Activated CD8-positive, alpha-beta memory T cell treated with anti-CD3 and anti-CD28 coated beads, Interleukin-2, amount 10 ng/mL, durations not matched to agents 7 days and 5 days (primary cell): ENCODE measurements at regions of chr1 and their contacts with region 1.

Region 1: GRCh38 chr1:145978854-145979759 is 14.6 kb downstream of the POLR3GL start:
- DNase-seq: peak; percentile 96
- ATAC-seq: peak; percentile 93
- H3K4me3 Mint-ChIP-seq: no peak overlapping the region
- H3K27ac Mint-ChIP-seq: no peak overlapping the region
- H3K4me1 Mint-ChIP-seq: peaks cover 25% of the 10 kb centered on the region
- H3K27me3 Mint-ChIP-seq: no peaks in the 10 kb centered on the region

Region 2: GRCh38 chr1:145690624-145691035 is 288.5 kb before region 1 on chr1:
- CTCF ChIA-PET with region 1: no interaction called
- DNase-seq: peak; percentile 83
- ATAC-seq: peak; percentile 98
- H3K4me3 Mint-ChIP-seq: peak overlapping the region; percentile 37
- H3K27ac Mint-ChIP-seq: peak overlapping the region; percentile 83
- H3K4me1 Mint-ChIP-seq: peaks cover 32% of the 10 kb centered on the region
- H3K27me3 Mint-ChIP-seq: no peaks in the 10 kb centered on the region

Region 3: DNA sequence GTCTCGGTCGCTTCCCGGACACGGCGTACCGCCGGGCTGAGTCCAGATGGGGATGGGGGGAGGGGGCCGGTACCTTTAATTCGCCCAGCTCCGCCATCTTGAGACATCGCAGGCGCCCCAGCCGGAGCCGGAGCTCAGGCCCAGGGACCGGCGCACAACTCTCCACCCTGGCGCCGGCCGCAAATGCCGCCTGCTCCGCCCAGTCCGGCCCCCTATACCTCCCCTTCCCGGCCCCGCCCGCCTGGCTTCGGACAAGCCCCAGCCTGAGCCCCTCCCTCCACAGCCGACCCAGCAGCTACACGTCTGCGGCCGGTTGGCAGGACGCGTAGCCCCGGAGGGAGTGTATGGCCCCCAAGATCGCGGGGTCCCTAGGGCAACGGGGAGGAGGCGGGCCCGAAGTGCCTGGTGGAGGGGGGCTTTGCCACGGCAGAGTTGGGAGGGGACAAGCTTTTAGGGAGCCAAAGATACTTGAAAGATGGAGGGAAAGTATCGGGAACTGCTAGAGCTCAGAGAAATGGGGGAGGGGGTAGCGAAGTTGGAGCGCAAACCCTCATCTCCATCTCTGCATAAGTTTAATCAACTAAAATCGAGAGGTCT is 120.1 kb before region 1 on chr1 and contains the start of gene PIAS3:
- CTCF ChIA-PET with region 1: interaction called, 13 read pairs
- DNase-seq: peak; percentile 94
- ATAC-seq: peak; percentile 87
- H3K4me3 Mint-ChIP-seq: peak within 1 kb of the TSS; percentile 95
- H3K27ac Mint-ChIP-seq: peak within 1 kb of the TSS; percentile 87
- H3K4me1 Mint-ChIP-seq: peaks cover 10% of the 10 kb centered on the region
- H3K27me3 Mint-ChIP-seq: peaks cover 8% of the 10 kb centered on the region
- total RNA-seq, gene PIAS3: 20.3 to 23.6 TPM

Region 4: DNA sequence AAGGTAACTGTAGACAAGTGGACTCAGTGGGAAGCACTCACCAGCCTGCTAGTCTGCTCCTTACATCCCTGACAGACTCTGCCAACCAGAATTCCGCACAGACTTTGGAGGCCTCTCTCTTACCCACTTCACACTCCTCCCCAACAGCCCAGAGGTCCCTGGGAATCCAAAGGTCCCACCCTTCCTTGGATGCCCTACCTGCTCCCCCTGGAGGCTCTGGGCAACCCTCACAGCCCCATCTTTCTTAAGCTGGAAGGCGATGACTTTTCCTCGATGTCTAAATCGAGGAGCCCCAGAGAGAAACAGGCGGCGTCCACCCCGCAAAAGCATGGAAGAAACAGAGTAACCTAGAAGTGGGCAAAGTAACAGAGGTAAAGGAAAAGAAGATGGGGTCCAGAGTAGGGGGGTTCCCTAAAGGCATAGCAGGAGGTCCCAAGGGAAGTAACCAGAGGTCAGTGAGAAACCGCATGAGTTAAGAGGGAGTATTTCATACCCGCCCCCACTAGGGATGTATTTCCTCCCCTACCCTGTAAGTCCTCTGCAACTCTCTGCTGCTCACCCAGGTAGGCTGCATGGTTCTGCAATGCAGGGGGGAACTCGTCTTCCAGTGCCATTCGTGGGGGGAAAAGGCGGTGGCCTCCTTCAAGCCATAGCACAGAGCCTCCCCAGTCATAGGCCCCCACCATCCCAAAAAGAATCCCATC is 77.6 kb before region 1 on chr1:
- CTCF ChIA-PET with region 1: no interaction called
- DNase-seq: no peak
- ATAC-seq: no peak
- H3K4me3 Mint-ChIP-seq: no peak overlapping the region
- H3K27ac Mint-ChIP-seq: no peak overlapping the region
- H3K4me1 Mint-ChIP-seq: no peaks in the 10 kb centered on the region
- H3K27me3 Mint-ChIP-seq: no peaks in the 10 kb centered on the region

Region 5: DNA sequence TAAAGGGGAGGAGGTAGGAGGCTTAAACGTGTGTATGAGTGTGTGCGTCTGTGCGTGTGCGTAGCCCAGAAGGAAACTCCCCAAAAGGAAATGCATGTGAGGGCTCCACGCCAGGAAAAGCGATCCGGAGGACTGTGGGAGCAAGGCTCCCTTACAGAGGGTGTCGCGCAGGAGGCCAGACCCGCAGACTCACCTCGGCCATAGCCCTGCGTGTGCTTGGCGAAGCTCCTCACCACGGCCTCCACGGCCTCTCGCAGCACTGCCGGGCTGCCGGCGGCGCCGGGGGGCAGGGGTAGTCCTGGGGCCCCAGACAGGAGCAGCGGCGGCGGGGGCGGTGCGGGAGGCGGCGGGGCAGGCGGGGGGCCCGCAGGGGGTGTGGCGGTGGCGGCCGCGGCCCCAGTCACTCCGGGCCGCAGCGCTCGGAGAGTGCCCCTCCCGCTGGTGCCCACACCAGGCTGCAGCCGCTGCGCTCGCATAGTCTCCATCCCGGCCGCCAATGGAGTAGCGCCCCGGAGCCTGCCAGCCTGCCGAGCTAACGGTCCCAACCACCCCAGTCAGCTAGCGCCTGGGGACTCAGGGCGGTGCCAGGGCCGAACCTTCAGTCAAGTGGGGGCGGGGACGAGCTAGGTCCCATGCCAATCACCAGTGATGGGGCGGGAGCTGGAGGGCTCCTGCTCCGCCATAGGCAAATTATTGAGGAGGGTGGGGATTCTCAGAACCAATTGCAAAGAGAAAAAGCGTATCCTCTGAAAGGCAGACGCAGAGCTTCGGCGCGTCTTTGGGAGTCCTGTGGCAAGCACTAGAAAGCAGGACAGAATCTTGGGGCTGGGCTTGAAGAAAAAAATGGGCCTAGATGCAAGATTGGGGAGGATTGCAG is 21.4 kb before region 1 on chr1 and contains the start of gene LIX1L:
- CTCF ChIA-PET with region 1: interaction called, 95 read pairs
- DNase-seq: peak; percentile 98
- ATAC-seq: peak; percentile 90
- H3K4me3 Mint-ChIP-seq: peak within 1 kb of the TSS; percentile 91
- H3K27ac Mint-ChIP-seq: peak within 1 kb of the TSS; percentile 86
- H3K4me1 Mint-ChIP-seq: peaks cover 68% of the 10 kb centered on the region
- H3K27me3 Mint-ChIP-seq: no peaks in the 10 kb centered on the region
- total RNA-seq, gene LIX1L: 35.0 to 36.2 TPM

Region 6: GRCh38 chr1:145996433-145997015 is 17.4 kb after region 1 on chr1 and contains the start of gene TXNIP:
- CTCF ChIA-PET with region 1: interaction called, 160 read pairs
- DNase-seq: peak; percentile 98
- ATAC-seq: peak; percentile 95
- H3K4me3 Mint-ChIP-seq: peak within 1 kb of the TSS; percentile 99
- H3K27ac Mint-ChIP-seq: peak within 1 kb of the TSS; percentile 94
- H3K4me1 Mint-ChIP-seq: peaks cover 62% of the 10 kb centered on the region
- H3K27me3 Mint-ChIP-seq: no peaks in the 10 kb centered on the region
- total RNA-seq, gene TXNIP: 127 to 207 TPM

Region 7: GRCh38 chr1:146019231-146020057 is 40.3 kb after region 1 on chr1:
- CTCF ChIA-PET with region 1: interaction called, 18 read pairs
- DNase-seq: no peak
- ATAC-seq: peak; percentile 53
- H3K4me3 Mint-ChIP-seq: no peak overlapping the region
- H3K27ac Mint-ChIP-seq: no peak overlapping the region
- H3K4me1 Mint-ChIP-seq: peaks cover 4% of the 10 kb centered on the region
- H3K27me3 Mint-ChIP-seq: peaks cover 78% of the 10 kb centered on the region